Motor neuron (in vitro differentiated cells): ENCODE measurements at regions of chr17 and their contacts with region 1.

Region 1: DNA sequence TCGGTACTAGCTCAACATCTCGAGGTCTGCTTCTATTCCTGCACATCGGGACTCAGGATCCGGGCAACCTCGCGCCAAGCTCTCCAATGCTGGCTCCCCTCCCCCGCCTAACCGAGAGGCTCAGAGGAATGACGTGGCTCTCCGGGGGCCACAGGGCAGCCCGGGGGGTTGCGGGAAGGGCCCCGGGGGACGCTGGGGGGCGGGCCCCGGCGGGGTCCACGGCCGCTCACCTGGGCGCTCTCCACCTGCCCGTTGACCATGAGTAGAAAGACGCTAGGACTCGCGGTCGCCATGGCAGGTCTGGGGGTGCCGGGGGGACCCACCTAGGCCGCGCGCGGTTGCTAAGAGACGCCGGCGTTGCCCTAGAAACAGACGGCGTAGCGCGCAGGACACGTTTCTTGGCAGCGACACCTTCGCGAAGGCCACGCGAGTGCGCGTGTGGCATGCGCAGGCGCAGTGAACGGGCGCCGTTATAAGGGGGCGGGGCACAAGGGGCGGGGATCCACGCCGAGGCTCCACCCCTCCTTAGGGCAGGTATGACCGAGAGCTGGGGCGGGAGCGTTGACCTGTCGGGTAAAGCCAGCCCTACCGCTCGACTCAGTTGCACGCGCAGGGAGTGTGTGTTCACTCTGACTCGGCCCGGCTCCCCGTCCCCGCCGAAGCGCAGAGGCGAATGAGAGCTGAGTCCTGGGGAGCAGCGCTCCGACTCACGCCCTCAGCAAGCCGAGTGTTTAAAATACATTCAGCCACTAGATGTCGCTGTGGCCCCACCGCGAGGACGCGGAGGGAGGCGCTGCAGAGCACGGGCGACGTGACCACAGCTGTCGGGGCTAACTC is at the start of gene B9D1:
- ATAC-seq: peak; percentile 80 to 90 (median 82)
- H3K4me3 ChIP-seq: peak within 1 kb of the TSS; percentile 67 to 90 (median 82)
- H3K27ac ChIP-seq: peak within 1 kb of the TSS; percentile 91 to 94
- H3K4me1 ChIP-seq: peaks cover 9 to 11% of the 10 kb centered on the region in 2 donors
- total RNA-seq, gene B9D1: 22.5 to 48.1 (median 36.5) TPM

Region 2: GRCh38 chr17:19433727-19434340 is 71.3 kb after region 1 on chr17:
- in situ Hi-C with region 1: loop called in 1 of 9 experiments (anchors 10 kb)
- ATAC-seq: no peak
- H3K4me3 ChIP-seq: no peak overlapping the region
- H3K27ac ChIP-seq: no peak overlapping the region
- H3K4me1 ChIP-seq: peaks cover 13 to 28% of the 10 kb centered on the region in 2 donors

Region 3: DNA sequence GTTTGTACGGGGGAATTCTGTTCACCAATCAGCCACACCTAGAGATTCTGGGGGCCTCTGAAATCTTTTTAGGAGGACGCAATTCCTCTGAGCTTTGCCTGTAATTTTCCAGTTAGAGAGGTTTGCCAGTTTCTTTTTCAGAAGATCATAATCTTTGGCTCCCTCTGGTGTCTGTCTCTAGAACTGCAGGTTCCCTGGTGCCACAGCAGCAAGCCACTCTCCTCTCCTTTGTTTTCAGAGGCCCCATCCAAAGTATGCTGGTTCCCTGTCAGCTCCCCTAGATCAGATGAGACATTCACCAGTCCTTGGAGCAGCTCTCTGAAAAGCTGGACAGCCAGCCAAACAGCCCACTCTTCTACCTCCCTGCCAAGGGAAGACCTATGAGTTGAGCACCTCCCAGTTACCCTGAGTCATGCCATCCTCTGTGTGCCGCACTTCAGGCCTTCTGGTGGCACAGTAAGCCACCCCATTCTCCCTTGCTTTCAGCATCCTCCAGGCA is 84.6 kb after region 1 on chr17:
- in situ Hi-C with region 1: loop called in 2 of 9 experiments (anchors 5 to 25 kb)
- ATAC-seq: peak in 7 of 8 experiments; percentile 5 to 49 (median 39)
- H3K4me3 ChIP-seq: no peak overlapping the region
- H3K27ac ChIP-seq: no peak overlapping the region
- H3K4me1 ChIP-seq: peaks cover 24 to 25% of the 10 kb centered on the region in 2 donors

Region 4: DNA sequence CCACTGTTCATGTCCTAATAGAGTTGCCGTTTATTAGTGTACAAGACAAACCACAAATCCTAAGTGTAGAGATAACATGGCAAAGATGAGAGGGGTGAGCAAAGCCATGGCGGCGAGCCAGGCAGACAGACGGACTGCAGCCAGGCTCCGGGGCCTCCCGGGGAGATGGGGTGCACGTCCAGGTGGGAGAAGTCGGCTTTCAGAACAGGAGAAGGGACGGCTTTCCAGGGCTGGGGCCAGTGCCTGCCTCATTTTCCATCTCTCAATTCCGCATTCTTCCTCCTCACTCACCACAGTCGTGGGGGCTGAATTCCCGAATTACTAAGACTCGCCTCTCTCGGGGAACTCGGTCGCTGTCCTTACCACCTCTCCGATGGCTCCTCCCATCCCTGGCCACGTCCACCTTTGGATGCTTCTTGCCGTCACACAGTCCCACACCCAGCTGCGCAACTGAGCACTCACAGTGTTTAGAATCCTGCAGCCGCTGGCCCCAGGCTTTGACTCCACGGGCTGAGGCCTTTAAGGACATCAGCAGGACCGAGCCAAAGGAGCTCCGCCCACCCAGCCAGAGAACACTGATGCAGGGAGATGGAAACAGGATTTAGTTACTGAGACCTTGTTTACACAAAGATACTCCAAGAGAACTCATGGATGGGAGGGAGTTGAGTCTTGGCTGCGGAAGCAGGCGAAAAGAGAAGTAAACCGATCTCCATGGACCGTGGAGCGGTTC is 108.2 kb after region 1 on chr17:
- in situ Hi-C with region 1: loop called in 1 of 9 experiments (anchors 25 kb)
- ATAC-seq: peak in 6 of 8 experiments; percentile 22 to 88 (median 61)
- H3K4me3 ChIP-seq: no peak overlapping the region
- H3K27ac ChIP-seq: no peak overlapping the region
- H3K4me1 ChIP-seq: no peaks in the 10 kb centered on the region

Region 5: DNA sequence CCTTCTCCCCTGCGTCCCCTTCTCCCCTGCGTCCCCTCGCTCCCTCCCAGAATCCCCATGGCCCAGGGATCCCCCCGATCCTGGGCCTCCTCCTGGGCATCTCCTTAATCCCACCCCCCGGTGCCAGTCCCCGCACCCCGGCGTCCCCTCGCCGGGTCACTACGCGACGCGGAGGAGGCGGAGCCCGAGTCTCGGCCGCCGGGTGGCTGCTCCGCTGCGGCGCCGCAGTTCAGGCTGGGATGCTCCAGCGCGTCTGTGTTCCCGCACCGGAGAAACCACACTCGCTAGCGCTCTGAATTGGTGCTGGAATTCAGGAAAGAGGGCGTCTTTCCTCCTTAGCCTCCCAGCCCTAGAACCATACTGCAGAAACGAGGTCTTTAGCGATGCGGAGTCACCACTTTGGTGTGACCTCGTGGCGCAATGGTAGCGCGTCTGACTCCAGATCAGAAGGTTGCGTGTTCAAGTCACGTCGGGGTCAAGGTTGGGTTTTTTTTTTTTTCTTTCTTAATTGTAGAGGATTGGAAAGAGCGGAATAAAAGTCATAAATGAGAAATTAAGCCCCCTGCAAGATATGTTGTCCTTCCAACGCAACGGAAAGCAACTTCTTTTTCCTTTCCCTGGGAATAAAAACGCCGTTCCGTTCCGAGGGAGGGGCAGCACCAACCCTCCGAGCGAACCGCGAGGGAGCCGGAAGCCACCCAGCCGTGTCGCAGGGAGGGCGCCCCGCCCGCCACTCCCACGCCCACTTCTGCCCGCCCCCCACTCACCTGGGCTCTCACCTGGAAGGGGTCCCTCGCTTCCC is 145.5 kb after region 1 on chr17:
- in situ Hi-C with region 1: loop called in 1 of 9 experiments (anchors 10 kb)
- ATAC-seq: peak; percentile 87 to 93 (median 92)
- H3K4me3 ChIP-seq: peak overlapping the region; percentile 51 to 70 (median 55)
- H3K27ac ChIP-seq: peak overlapping the region; percentile 87 to 88
- H3K4me1 ChIP-seq: no peaks in the 10 kb centered on the region

Region 6: DNA sequence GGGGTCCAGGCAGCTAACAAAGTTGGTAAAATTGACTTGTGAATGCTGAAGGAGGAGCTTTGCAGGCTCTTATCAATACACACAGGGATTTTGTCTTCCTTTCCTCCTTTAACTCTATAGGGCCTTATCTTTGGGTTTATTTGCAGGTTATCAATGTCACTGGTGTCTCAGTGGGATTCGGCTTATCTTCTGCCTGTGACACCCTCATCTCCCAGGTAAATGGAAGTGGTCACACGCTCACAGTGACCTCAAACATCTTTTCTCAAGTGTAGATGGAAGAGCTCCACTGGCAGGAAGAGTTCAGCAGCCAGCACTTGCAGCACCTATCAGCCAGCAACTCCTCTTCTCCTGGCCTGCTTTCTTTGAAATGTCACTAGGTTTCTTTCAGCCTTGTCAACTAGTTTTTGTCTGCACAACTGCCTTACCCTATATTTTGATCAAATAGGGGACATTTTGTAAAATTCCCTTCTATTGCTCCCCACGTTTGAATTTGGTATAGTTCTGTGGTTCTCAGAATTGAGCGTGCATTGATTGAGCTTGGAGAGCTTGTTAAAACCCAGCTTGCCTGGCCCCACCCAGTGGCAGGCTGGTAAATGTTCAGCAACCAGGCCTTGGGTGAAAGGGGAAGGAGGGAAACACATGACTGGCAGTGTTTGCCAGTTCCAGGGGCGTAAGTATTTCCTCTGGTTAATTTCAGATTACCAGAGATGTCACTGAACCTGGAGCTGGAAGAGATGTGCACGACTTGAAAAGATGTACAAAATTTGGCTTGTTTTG is 184.0 kb after region 1 on chr17:
- in situ Hi-C with region 1: no loop called
- ATAC-seq: no peak
- H3K4me3 ChIP-seq: no peak overlapping the region
- H3K27ac ChIP-seq: no peak overlapping the region
- H3K4me1 ChIP-seq: no peaks in the 10 kb centered on the region

Region 7: GRCh38 chr17:19569785-19570543 is 207.5 kb after region 1 on chr17:
- in situ Hi-C with region 1: no loop called
- ATAC-seq: no peak
- H3K4me3 ChIP-seq: no peak overlapping the region
- H3K27ac ChIP-seq: no peak overlapping the region
- H3K4me1 ChIP-seq: no peaks in the 10 kb centered on the region

Region 8: GRCh38 chr17:19766422-19767270 is 404.2 kb after region 1 on chr17:
- in situ Hi-C with region 1: loop called in 8 of 9 experiments (anchors 25 kb)
- ATAC-seq: peak; percentile 87 to 96 (median 93)
- H3K4me3 ChIP-seq: no peak overlapping the region
- H3K27ac ChIP-seq: no peak overlapping the region
- H3K4me1 ChIP-seq: peaks cover 0 to 8% of the 10 kb centered on the region in 2 donors